ENCODE measurements at regions of chr1 and their contacts with region 1.

Region 1: DNA sequence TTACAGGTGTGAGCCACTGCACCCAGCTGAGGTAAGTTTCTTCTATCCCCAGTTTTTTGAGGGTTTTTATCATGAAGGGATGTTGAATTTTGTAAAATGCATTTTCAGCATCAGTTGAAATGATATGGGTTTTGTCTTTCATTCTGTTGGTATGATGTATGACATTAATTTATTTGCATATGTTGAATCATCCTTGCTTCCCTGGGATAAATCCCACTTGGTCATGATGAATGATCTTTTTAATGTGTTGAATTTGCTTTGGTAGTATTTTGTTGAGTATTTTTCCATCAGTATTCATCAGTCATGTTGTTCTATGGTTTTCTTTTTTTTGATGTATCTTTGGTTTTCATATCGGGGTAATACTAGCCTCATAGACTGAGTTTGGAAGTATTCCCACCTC is 141.0 kb downstream of the RPS6KC1 start:
- ATAC-seq: peak in 1 of 8 experiments; percentile 17
- H3K4me3 ChIP-seq: no peak overlapping the region
- H3K27ac ChIP-seq: no peak overlapping the region
- H3K4me1 ChIP-seq: no peaks in the 10 kb centered on the region

Region 2: GRCh38 chr1:212814537-212815334 is 377.3 kb before region 1 on chr1:
- in situ Hi-C with region 1: no loop called
- ATAC-seq: no peak
- H3K4me3 ChIP-seq: no peak overlapping the region
- H3K27ac ChIP-seq: no peak overlapping the region
- H3K4me1 ChIP-seq: peaks cover 5% of the 10 kb centered on the region in 2 donors

Region 3: DNA sequence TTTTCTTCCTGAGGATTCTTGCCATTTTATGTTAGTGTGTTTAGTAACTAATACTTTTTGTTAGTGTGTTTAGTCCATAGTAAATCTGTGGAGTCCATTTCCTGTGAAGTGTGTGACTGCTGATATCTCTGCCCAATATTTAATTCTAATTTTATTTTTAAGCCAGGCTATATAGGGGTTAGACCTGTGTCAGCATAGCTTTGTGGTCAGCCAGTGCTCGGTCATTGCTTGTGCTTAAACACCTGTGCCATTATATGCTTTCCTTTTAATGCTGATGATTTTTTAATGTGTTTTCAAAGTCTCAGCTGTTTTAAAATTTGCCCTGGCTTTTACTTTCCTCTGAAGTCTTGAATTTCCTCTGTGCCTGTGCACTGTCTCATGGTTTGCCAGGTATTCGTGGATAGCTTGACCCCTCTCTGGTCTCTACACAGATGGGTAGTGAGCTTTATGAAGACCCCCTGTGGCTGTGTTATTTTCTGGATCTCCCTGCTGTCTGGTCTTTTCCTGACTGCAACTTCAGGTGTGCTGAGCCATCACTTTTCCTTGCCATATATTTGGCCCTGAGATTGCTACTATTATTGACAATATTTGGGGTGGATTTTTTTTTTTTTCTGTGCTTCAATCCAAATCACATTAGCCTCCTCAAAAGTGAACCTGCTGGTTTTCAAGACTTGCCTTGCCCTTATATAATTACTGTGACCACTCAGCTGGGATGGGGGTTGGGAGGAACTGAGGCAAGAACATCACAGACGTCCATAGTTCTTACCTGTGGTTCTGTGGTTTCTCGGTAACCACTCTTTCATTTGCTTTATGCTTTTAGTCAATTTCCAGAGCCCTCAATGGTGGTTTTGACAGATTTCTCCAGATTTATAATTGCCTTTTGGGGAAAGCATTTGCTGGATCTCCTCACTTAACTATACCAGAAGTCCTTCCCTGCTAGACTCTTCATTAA is 81.4 kb before region 1 on chr1:
- in situ Hi-C with region 1: no loop called
- ATAC-seq: no peak
- H3K4me3 ChIP-seq: no peak overlapping the region
- H3K27ac ChIP-seq: no peak overlapping the region
- H3K4me1 ChIP-seq: no peaks in the 10 kb centered on the region

Region 4: DNA sequence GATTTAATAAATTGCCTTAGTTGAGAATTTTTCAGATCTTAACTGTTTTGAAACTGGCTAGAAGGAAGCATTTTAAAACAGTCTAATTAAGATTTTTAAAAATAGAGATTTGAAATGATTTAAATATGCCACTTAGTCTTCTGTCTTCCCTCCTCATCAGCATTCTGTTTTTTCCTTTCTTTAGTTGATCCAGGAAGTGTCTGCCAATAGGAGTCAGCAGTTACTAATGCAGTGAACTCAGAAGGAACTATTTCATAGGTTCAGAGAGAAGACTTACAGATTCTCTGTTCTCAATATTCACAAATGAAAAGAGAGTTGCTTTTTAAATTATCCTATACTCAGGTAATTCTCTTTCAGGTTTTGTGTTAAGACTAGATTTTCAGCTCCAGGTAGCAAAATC is 56.5 kb before region 1 on chr1:
- in situ Hi-C with region 1: loop called in 1 of 9 experiments (anchors 10 kb)
- ATAC-seq: peak in 2 of 8 experiments; percentile 40 to 54
- H3K4me3 ChIP-seq: no peak overlapping the region
- H3K27ac ChIP-seq: no peak overlapping the region
- H3K4me1 ChIP-seq: no peaks in the 10 kb centered on the region

Region 5: DNA sequence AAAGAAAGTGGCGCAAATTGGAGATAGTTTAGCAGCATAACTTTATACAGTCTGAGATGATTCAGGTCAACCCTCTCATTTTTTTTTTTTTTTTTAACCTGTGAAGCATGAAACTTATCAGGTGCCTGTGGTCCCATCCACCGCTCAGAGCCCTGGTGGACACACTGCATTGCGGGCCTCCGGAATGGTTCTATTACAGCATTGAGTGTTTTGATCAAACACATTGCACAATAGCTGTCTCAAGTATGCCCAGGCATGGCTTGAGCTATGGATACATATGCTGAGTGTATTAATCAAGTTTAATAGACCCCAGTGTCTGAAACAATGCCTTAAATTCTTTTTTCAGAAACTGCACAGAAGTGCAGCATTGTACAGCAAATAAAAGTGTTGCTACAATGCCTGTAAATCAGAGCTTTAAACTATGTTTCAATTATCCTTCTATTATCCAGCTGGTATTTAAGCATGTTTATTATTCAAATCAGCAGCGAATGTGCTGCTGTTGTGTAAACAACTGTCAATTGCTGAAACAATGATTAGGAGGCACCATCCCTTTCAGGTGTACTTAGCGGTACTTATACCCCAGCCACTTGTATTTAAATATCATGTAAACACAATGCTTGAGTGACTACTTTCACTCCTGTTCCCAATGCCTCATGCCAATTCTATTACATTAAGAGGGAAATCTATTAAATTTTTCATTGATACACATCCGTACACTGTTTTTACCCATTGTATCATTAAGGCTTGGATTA is 315.6 kb after region 1 on chr1:
- in situ Hi-C with region 1: no loop called
- ATAC-seq: peak in 1 of 8 experiments; percentile 40
- H3K4me3 ChIP-seq: no peak overlapping the region
- H3K27ac ChIP-seq: no peak overlapping the region
- H3K4me1 ChIP-seq: no peaks in the 10 kb centered on the region